Psoas muscle (tissue), 8 donors: ENCODE measurements at regions of chr3 and their contacts with region 1.

Region 1: DNA sequence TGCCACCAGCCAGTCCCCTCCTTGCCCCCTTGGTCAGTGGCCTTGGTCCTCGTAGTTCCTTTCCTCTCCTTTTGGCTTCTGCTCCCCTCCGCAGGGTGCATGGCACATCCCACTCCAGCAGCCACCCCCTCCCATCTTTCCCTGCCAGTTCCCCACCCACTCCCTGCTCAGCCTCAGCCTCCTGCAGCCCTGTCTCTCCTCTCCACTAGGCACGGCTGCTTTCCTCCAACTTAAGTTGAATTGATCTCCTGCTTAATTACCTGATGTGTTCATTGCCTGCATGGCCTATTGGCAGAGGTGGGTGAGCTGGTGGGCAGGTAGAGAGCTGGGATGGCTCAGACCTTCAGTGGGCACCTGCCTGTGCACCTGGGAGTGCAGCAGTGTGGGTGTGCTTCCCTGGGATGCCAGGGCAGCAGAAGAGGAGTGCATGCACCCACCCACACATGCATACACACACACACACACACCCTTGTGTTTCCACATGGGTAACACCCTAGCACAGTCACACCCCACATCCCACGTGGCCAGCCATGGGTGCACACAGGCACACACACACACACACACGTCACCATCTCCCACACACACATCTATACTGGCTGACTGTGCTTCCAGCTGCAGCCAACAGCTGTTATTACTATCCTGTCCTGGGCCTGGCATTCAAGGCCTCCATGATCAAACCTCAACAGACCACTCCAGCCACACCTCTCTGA is 30.9 kb downstream of the C3orf18 start:
- DNase-seq: no peak
- ATAC-seq: no peak
- H3K4me3 ChIP-seq: no peak overlapping the region
- H3K27ac ChIP-seq: no peak overlapping the region
- H3K4me1 ChIP-seq: no peaks in the 10 kb centered on the region
- H3K27me3 ChIP-seq: no peaks in the 10 kb centered on the region
- CTCF ChIP-seq: no peak

Region 2: GRCh38 chr3:49512771-49513358 is 1023.8 kb before region 1 on chr3:
- intact Hi-C with region 1: no loop called
- DNase-seq: no peak
- ATAC-seq: no peak
- H3K4me3 ChIP-seq: no peak overlapping the region
- H3K27ac ChIP-seq: peak overlapping the region; percentile 26
- H3K4me1 ChIP-seq: peaks cover 31% of the 10 kb centered on the region
- H3K27me3 ChIP-seq: no peaks in the 10 kb centered on the region
- CTCF ChIP-seq: no peak

Region 3: GRCh38 chr3:50365080-50365841 is 171.4 kb before region 1 on chr3:
- intact Hi-C with region 1: loop called in 1 of 2 experiments (anchors 5 kb)
- DNase-seq: peak; percentile 79 to 90
- ATAC-seq: peak; percentile 54 to 93 (median 84)
- H3K4me3 ChIP-seq: peak overlapping the region; percentile 57
- H3K27ac ChIP-seq: no peak overlapping the region
- H3K4me1 ChIP-seq: no peaks in the 10 kb centered on the region
- H3K27me3 ChIP-seq: peaks cover 0 to 3% (median 0%) of the 10 kb centered on the region in 3 donors
- CTCF ChIP-seq: no peak

Region 4: GRCh38 chr3:50550079-50550741 is 13.6 kb after region 1 on chr3:
- intact Hi-C with region 1: no loop called
- DNase-seq: peak; percentile 49 to 68
- ATAC-seq: peak; percentile 46 to 80 (median 62)
- H3K4me3 ChIP-seq: no peak overlapping the region
- H3K27ac ChIP-seq: no peak overlapping the region
- H3K4me1 ChIP-seq: no peaks in the 10 kb centered on the region
- H3K27me3 ChIP-seq: peaks cover 0 to 1% (median 0%) of the 10 kb centered on the region in 3 donors
- CTCF ChIP-seq: peak; percentile 70

Region 5: GRCh38 chr3:50652709-50653108 is 116.1 kb after region 1 on chr3:
- intact Hi-C with region 1: no loop called
- DNase-seq: peak; percentile 47 to 80
- ATAC-seq: peak; percentile 60 to 71 (median 66)
- H3K4me3 ChIP-seq: no peak overlapping the region
- H3K27ac ChIP-seq: no peak overlapping the region
- H3K4me1 ChIP-seq: peaks cover 30% of the 10 kb centered on the region
- H3K27me3 ChIP-seq: no peaks in the 10 kb centered on the region
- CTCF ChIP-seq: peak; percentile 54